Endothelial cell of umbilical vein (primary cell): ENCODE measurements at regions of chr12 and their contacts with region 1.

Region 1: GRCh38 chr12:3097186-3097804 is 20.1 kb downstream of the TSPAN9 start:
- DNase-seq: peak; percentile 87
- H3K4me3 ChIP-seq: no peak overlapping the region
- H3K27ac ChIP-seq: peak overlapping the region; percentile 73
- H3K4me1 ChIP-seq: peaks cover 27% of the 10 kb centered on the region
- H3K27me3 ChIP-seq: no peaks in the 10 kb centered on the region
- CTCF ChIP-seq: no peak
- POLR2A ChIP-seq: peak; percentile 57

Region 2: DNA sequence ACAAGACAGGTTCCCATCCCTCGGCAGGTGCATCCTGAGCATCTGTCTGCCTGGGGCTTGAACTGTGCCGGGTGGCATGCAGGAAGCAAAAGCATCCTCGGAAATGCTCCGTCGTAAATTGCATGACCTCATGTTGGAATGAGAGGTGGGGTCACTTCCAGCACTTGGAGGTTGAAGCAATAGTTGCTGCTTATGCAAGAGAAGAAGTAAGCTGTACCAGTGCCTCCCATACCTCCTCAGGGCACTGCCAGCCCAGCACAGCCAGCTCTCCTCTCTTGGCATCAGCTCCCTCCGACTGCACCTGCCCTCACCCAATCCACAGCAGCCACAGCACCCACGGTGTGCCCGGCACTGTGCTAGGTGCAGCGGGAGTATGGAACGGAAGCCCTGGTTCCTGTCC is 126.6 kb before region 1 on chr12:
- CTCF ChIA-PET with region 1: no interaction called
- POLR2A ChIA-PET with region 1: no interaction called
- dilution Hi-C with region 1: no loop called
- intact Hi-C with region 1: no loop called
- DNase-seq: no peak
- H3K4me3 ChIP-seq: no peak overlapping the region
- H3K27ac ChIP-seq: no peak overlapping the region
- H3K4me1 ChIP-seq: peaks cover 16% of the 10 kb centered on the region
- H3K27me3 ChIP-seq: no peaks in the 10 kb centered on the region
- CTCF ChIP-seq: no peak
- POLR2A ChIP-seq: no peak

Region 3: DNA sequence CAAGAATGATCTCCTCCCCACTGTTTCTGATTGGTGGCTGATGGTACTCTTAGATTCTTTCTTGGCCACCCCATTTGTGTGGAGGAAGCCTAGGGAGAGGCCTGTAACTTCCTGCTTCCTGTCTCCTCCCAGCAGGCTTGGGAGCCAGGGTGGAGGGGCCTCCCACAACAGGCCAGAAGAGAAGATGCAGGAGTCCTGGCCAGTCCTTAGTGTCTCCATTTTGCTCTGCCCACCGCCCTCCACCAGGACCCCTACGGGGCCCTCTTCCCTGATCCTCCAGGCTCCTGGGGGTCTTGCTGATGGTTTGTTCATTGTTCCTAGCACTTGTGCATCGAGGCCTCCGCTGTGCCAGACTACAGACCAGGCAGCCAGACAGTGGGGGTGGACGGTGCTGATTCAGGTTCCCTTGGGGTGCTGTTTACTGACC is 13.4 kb before region 1 on chr12:
- CTCF ChIA-PET with region 1: interaction called, 9 read pairs
- POLR2A ChIA-PET with region 1: no interaction called
- dilution Hi-C with region 1: no loop called
- intact Hi-C with region 1: loop called (anchors 2 kb)
- DNase-seq: peak; percentile 33
- H3K4me3 ChIP-seq: no peak overlapping the region
- H3K27ac ChIP-seq: peak overlapping the region; percentile 21
- H3K4me1 ChIP-seq: peaks cover 15% of the 10 kb centered on the region
- H3K27me3 ChIP-seq: no peaks in the 10 kb centered on the region
- CTCF ChIP-seq: no peak
- POLR2A ChIP-seq: no peak

Region 4: DNA sequence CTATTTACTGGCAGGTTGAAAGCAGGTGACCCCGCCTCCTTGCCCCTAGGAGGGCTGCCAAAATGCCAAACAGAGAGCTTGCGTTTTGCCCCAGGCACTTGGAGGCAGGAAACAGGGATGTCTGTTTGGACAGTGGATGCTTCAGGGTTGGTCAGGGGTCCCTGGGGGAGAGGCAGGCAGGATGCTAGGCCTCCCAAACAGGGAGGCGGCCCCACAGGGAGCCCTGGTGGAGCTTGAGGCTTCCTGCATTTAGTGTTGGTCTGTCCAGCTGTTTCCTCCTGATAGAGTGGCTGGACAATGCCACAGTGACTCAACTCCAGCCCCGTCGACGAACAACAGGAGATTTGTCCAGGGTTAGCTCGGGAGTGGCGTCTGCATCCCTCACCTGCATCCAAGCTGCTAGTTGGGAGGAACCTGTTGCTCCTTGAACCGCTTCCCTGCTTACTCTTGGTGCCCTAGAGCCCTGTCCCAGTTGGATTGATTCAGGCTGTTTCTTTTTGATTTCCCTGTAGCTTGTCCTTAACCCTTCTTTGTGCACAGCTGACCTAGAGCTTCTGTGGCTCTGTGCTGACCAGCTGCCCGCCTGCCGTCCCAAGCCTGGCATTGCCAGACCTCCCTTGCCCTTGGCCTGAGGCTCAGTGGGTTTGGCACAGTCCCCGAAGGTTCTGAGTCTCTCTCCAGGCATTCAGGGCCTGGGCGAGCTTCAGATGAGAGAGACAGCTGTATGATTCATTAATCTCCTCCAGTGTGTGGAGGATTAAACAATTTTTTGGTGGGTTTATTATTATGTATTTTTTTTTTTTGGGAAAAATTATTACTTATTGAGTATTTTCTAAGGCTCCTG is 25.8 kb after region 1 on chr12:
- CTCF ChIA-PET with region 1: interaction called, 22 read pairs
- POLR2A ChIA-PET with region 1: interaction called, 9 read pairs
- dilution Hi-C with region 1: no loop called
- intact Hi-C with region 1: loop called (anchors 1 kb)
- DNase-seq: peak; percentile 98
- H3K4me3 ChIP-seq: no peak overlapping the region
- H3K27ac ChIP-seq: peak overlapping the region; percentile 65
- H3K4me1 ChIP-seq: peaks cover 18% of the 10 kb centered on the region
- H3K27me3 ChIP-seq: no peaks in the 10 kb centered on the region
- CTCF ChIP-seq: peak; percentile 15 to 41
- POLR2A ChIP-seq: peak; percentile 72

Region 5: DNA sequence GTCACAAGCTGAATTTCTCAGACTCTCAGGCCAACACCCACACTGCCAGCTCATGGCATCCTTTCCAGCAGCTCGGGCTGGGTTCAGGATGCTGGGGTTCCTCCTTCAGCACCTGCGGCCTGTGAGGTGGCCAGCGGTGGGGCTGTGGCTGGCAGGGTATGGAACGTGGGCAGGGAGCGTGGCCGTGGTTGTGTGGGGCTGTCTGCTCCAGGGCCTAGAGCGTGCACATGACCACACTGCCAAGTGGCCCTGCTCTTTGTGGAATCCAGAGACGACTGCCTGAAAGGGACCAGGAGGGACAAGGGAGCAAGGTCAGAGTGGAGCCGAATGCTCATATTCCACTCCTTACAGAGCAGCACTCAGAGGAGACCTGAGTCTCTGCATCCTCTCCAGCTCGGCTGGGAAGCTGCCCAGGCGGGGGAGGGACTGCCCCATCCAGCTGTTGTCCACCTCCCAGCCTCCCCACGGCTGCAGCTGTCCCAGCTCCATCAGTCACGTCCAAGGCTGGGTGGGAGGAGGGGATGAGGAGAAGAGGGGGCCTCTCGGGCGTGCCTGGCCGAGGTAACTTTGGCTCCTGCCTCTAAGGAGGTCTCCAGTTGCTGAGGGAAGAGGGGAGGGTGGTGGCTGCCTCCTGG is 51.2 kb after region 1 on chr12:
- CTCF ChIA-PET with region 1: no interaction called
- POLR2A ChIA-PET with region 1: no interaction called
- dilution Hi-C with region 1: no loop called
- intact Hi-C with region 1: no loop called
- DNase-seq: no peak
- H3K4me3 ChIP-seq: no peak overlapping the region
- H3K27ac ChIP-seq: no peak overlapping the region
- H3K4me1 ChIP-seq: peaks cover 32% of the 10 kb centered on the region
- H3K27me3 ChIP-seq: no peaks in the 10 kb centered on the region
- CTCF ChIP-seq: no peak
- POLR2A ChIP-seq: no peak

Region 6: GRCh38 chr12:4246116-4246515 is 1148.8 kb after region 1 on chr12:
- CTCF ChIA-PET with region 1: no interaction called
- POLR2A ChIA-PET with region 1: no interaction called
- dilution Hi-C with region 1: no loop called
- intact Hi-C with region 1: no loop called
- DNase-seq: no peak
- H3K4me3 ChIP-seq: no peak overlapping the region
- H3K27ac ChIP-seq: no peak overlapping the region
- H3K4me1 ChIP-seq: no peaks in the 10 kb centered on the region
- H3K27me3 ChIP-seq: no peaks in the 10 kb centered on the region
- CTCF ChIP-seq: no peak
- POLR2A ChIP-seq: no peak